HEK293 (cell line): ENCODE measurements at regions of chr18 and their contacts with region 1.

Region 1: GRCh38 chr18:67525328-67526099 is 9.0 kb upstream of the DSEL start:
- H3K4me3 ChIP-seq: no peak overlapping the region
- H3K27ac ChIP-seq: no peak overlapping the region
- H3K4me1 ChIP-seq: no peaks in the 10 kb centered on the region
- CTCF ChIP-seq: no peak

Region 2: GRCh38 chr18:67884429-67884828 is 358.9 kb after region 1 on chr18:
- CTCF ChIA-PET with region 1: interaction called, 10 read pairs
- POLR2A ChIA-PET with region 1: no interaction called
- H3K4me3 ChIP-seq: no peak overlapping the region
- H3K27ac ChIP-seq: no peak overlapping the region
- H3K4me1 ChIP-seq: no peaks in the 10 kb centered on the region
- CTCF ChIP-seq: no peak